GM10248 (cell line): ENCODE measurements at regions of chr22 and their contacts with region 1.

Region 1: DNA sequence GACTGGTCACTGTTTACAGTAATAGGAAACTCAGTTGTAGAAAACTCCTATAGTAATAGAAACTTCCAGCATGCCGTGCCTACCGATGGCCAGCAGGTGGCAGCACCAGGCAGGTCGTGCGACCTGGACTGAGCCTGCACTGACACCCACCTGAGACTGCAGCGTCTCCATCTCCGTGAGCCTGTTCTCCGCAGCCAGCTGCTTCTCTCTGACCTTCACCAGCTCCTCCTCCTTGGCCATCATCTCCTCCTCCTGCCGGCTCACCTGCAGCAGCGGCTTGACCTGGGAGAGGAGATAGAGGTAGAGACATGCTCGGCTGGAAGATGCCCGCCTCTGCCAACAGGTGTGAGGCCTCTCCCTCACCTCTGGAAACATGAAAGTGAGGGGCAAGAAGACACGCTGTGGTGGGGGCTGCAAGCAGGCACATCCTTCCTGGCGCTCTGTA is 48.5 kb downstream of the APOL1 start:
- DNase-seq: peak; percentile 86
- CTCF ChIP-seq: peak; percentile 92

Region 2: GRCh38 chr22:36277482-36278291 is 23.7 kb before region 1 on chr22:
- CTCF ChIA-PET with region 1: interaction called, 36 read pairs
- POLR2A ChIA-PET with region 1: no interaction called
- DNase-seq: peak; percentile 80
- CTCF ChIP-seq: peak; percentile 68

Region 3: DNA sequence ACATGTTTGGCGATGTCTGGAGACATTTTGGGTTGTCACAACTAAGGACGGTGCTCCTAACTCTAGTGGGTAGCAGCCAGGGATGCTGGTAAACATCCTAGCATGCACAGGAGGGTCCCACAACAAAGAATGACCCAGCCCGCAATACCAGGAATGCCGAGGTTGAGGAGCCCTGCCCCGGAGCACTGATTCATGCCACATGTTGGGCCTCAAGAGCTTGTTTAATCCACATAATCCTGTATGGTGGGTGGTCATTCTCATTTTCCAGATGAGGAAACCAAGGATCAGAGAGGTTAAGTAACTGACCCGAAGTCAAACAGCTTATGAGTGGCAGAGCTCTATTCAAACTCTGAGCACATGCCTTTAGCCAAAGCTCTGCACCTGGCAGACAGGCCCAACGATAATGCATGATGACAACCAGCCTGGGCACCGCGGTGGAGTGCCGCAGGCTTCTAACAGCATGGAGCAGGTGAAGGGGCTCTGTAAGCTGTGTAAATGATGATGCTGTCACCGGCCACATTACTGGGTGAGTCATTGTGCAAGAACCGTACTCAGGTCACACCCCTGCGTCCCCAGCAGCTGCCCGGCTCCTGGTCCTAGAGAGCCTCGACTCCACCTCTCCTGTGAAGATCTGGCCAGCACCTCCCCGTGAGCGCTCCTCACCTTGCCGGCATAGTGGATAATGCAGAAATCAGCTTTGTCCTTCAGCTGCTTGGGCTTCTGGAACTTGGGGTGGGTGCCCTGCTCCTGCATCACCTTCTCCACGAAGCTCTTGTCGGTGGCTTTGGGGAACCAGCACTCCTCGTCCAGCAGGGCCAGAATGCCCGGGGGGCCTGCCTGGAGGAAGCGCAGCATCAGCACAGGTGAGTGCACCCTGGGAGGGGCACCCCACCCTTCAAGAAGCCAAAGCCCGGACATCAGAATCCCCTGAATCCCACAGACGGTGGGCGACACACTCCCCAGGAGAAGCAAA is 10.3 kb after region 1 on chr22:
- CTCF ChIA-PET with region 1: interaction called, 40 read pairs
- POLR2A ChIA-PET with region 1: no interaction called
- DNase-seq: no peak
- CTCF ChIP-seq: no peak

Region 4: GRCh38 chr22:36325154-36326031 is 24.0 kb after region 1 on chr22:
- CTCF ChIA-PET with region 1: interaction called, 22 read pairs
- POLR2A ChIA-PET with region 1: no interaction called
- DNase-seq: no peak
- CTCF ChIP-seq: no peak

Region 5: GRCh38 chr22:36379593-36380361 is 78.4 kb after region 1 on chr22:
- CTCF ChIA-PET with region 1: interaction called, 19 read pairs
- POLR2A ChIA-PET with region 1: no interaction called
- DNase-seq: no peak
- CTCF ChIP-seq: no peak

Region 6: GRCh38 chr22:36470162-36470993 is 169.0 kb after region 1 on chr22:
- CTCF ChIA-PET with region 1: interaction called, 233 read pairs
- POLR2A ChIA-PET with region 1: no interaction called
- DNase-seq: peak; percentile 86
- CTCF ChIP-seq: peak; percentile 95

Region 7: GRCh38 chr22:36546092-36546804 is 244.8 kb after region 1 on chr22:
- CTCF ChIA-PET with region 1: no interaction called
- POLR2A ChIA-PET with region 1: no interaction called
- DNase-seq: peak; percentile 65
- CTCF ChIP-seq: peak; percentile 58